ENCODE measurements at regions of chr13 and their contacts with region 1.

Region 1: GRCh38 chr13:98556968-98557631 is 19.8 kb downstream of the STK24 start:
- DNase-seq: peak in 5 of 14 experiments; percentile 33 to 66 (median 48)
- ATAC-seq: peak; percentile 63
- H3K4me3 ChIP-seq: no peak overlapping the region
- H3K4me3 Mint-ChIP-seq: peak overlapping the region; percentile 78
- H3K27ac ChIP-seq: no peak overlapping the region
- H3K27ac Mint-ChIP-seq: peak overlapping the region; percentile 77
- H3K4me1 ChIP-seq: peaks cover 89% of the 10 kb centered on the region
- H3K4me1 Mint-ChIP-seq: peaks cover 87% of the 10 kb centered on the region
- H3K27me3 ChIP-seq: no peaks in the 10 kb centered on the region
- H3K27me3 Mint-ChIP-seq: no peaks in the 10 kb centered on the region
- CTCF ChIP-seq: no peak

Region 2: DNA sequence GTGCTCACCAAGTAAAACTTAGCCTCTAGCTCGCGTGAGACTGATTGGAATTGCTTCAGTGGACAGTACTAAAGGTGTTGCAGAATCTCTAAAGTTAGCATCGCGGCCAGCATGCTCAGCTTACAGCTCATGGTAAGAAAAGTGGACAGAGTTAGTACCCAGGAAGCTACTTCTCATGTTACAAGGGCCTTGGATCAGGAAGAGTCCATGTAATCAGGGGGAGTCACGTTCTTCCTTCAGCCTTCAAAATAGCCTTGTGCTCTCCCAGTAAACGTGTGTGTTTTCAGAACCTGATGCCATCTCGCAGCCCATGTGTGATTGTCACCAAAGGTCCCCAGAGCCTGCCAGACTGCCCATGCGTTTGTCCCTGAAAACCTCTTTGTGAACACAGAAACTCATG is 184.2 kb before region 1 on chr13:
- CTCF ChIA-PET with region 1: no interaction called
- POLR2A ChIA-PET with region 1: no interaction called
- intact Hi-C with region 1: no loop called
- DNase-seq: no peak
- ATAC-seq: no peak
- H3K4me3 ChIP-seq: no peak overlapping the region
- H3K4me3 Mint-ChIP-seq: no peak overlapping the region
- H3K27ac ChIP-seq: no peak overlapping the region
- H3K27ac Mint-ChIP-seq: no peak overlapping the region
- H3K4me1 ChIP-seq: no peaks in the 10 kb centered on the region
- H3K4me1 Mint-ChIP-seq: no peaks in the 10 kb centered on the region
- H3K27me3 ChIP-seq: no peaks in the 10 kb centered on the region
- H3K27me3 Mint-ChIP-seq: peaks cover 21% of the 10 kb centered on the region
- CTCF ChIP-seq: no peak

Region 3: DNA sequence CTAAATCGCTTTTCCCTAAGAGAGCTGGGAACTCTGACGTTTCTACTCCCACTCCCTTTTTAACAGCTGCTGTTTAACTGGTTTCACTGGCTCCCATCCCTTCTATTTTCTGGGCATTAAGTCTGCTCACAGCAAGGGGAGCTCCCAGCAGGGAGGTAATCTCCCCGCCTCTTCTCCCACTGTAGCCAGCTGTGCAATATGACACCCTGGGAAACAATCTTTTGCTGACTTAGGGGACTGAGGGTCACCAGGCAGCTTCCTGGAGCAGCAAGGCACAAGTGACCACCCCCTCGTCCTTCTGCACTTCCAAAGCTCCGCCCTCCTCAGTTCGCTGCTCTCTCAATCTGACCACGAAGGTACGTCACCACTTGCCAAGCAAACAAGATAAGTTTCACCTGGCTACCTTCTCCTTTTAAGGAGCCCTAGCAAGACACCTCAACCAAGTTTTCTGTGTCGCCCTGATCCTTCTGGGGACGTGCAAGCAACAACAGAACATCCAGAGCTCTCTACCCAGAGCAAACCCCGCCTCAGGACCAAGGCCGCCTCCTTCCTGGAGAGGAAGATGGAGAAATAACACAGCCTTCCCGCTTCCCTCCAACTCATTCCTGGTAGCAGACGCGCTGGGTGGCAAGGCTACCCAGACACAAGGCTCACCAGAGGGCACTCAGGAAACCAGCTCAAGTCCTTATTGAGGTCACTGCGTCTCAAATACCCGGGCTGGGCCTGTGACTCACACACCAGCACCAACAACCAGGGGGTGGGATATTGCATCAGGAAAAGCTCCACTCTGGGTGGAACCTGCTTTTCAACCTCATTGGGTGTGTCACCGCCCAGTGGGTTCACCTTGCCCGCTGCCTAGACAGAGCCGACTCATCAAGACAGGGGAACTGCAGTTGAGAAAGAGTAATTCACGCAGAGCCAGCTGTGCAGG is 72.5 kb before region 1 on chr13:
- CTCF ChIA-PET with region 1: interaction called, 11 read pairs
- POLR2A ChIA-PET with region 1: interaction called, 5 read pairs
- intact Hi-C with region 1: no loop called
- DNase-seq: peak; percentile 33 to 93 (median 61)
- ATAC-seq: peak; percentile 80
- H3K4me3 ChIP-seq: no peak overlapping the region
- H3K4me3 Mint-ChIP-seq: peak overlapping the region; percentile 69
- H3K27ac ChIP-seq: peak overlapping the region; percentile 29 to 50
- H3K27ac Mint-ChIP-seq: peak overlapping the region; percentile 89
- H3K4me1 ChIP-seq: peaks cover 88% of the 10 kb centered on the region
- H3K4me1 Mint-ChIP-seq: peaks cover 81% of the 10 kb centered on the region
- H3K27me3 ChIP-seq: no peaks in the 10 kb centered on the region
- H3K27me3 Mint-ChIP-seq: no peaks in the 10 kb centered on the region
- CTCF ChIP-seq: no peak

Region 4: GRCh38 chr13:98504371-98504963 is 52.6 kb before region 1 on chr13:
- CTCF ChIA-PET with region 1: no interaction called
- POLR2A ChIA-PET with region 1: no interaction called
- intact Hi-C with region 1: no loop called
- DNase-seq: peak in 3 of 14 experiments; percentile 41 to 63 (median 51)
- ATAC-seq: peak; percentile 61
- H3K4me3 ChIP-seq: no peak overlapping the region
- H3K4me3 Mint-ChIP-seq: no peak overlapping the region
- H3K27ac ChIP-seq: no peak overlapping the region
- H3K27ac Mint-ChIP-seq: peak overlapping the region; percentile 81
- H3K4me1 ChIP-seq: peaks cover 62% of the 10 kb centered on the region
- H3K4me1 Mint-ChIP-seq: peaks cover 92% of the 10 kb centered on the region
- H3K27me3 ChIP-seq: no peaks in the 10 kb centered on the region
- H3K27me3 Mint-ChIP-seq: no peaks in the 10 kb centered on the region
- CTCF ChIP-seq: no peak

Region 5: DNA sequence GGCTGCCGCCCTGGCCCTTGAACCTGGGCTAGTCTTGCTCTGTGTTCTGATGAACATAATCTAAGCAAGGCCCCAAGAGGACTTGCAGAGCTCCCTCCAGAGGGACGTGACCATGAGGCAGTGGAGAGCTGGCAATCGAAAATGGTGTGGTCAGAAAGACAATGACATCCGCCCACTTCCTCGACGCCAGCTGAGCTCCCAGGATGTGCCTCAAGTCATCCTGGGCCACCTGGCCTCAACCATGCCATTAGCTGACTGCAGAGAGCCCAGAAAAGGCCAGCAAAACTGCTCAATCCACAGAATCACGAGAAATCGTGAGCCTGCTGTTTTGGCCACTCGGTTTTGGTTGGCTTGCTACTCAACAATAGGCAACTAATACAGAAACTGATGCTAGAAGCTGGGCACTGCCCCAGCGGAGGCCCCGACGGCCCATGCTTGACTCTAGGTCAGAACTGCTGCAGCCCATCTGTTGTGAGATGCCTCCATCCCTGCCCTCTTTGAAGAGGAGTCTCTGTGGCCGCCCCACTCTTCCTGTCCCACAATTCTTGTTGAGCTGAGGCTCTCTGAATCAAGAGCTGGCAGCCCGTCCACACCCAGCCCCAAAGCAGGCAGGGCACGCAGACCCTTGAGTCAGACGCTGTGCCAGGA is 33.5 kb before region 1 on chr13:
- CTCF ChIA-PET with region 1: interaction called, 3 read pairs
- POLR2A ChIA-PET with region 1: no interaction called
- intact Hi-C with region 1: loop called in 1 of 2 experiments (anchors 5 kb)
- DNase-seq: peak in 1 of 14 experiments; percentile 25
- ATAC-seq: no peak
- H3K4me3 ChIP-seq: no peak overlapping the region
- H3K4me3 Mint-ChIP-seq: peak overlapping the region; percentile 17
- H3K27ac ChIP-seq: peak overlapping the region; percentile 5 to 51
- H3K27ac Mint-ChIP-seq: peak overlapping the region; percentile 86
- H3K4me1 ChIP-seq: peaks cover 89% of the 10 kb centered on the region
- H3K4me1 Mint-ChIP-seq: peaks cover 92% of the 10 kb centered on the region
- H3K27me3 ChIP-seq: no peaks in the 10 kb centered on the region
- H3K27me3 Mint-ChIP-seq: no peaks in the 10 kb centered on the region
- CTCF ChIP-seq: no peak

Region 6: GRCh38 chr13:98542568-98543377 is 14.3 kb before region 1 on chr13:
- CTCF ChIA-PET with region 1: interaction called, 9 read pairs
- POLR2A ChIA-PET with region 1: no interaction called
- intact Hi-C with region 1: loop called in 1 of 2 experiments (anchors 2 kb)
- DNase-seq: peak in 3 of 14 experiments; percentile 47 to 58 (median 49)
- ATAC-seq: peak; percentile 61
- H3K4me3 ChIP-seq: peak overlapping the region; percentile 37
- H3K4me3 Mint-ChIP-seq: peak overlapping the region; percentile 65
- H3K27ac ChIP-seq: peak overlapping the region in 1 of 2 donors; percentile 28
- H3K27ac Mint-ChIP-seq: peak overlapping the region; percentile 63
- H3K4me1 ChIP-seq: peaks cover 77% of the 10 kb centered on the region
- H3K4me1 Mint-ChIP-seq: peaks cover 94% of the 10 kb centered on the region
- H3K27me3 ChIP-seq: no peaks in the 10 kb centered on the region
- H3K27me3 Mint-ChIP-seq: no peaks in the 10 kb centered on the region
- CTCF ChIP-seq: no peak

Region 7: GRCh38 chr13:98570929-98571372 is 13.9 kb after region 1 on chr13:
- CTCF ChIA-PET with region 1: interaction called, 4 read pairs
- POLR2A ChIA-PET with region 1: interaction called, 16 read pairs
- intact Hi-C with region 1: loop called in 1 of 2 experiments (anchors 1 kb)
- DNase-seq: peak in 7 of 14 experiments; percentile 21 to 80 (median 52)
- ATAC-seq: peak; percentile 59
- H3K4me3 ChIP-seq: peak overlapping the region; percentile 59
- H3K4me3 Mint-ChIP-seq: peak overlapping the region; percentile 92
- H3K27ac ChIP-seq: peak overlapping the region; percentile 55 to 71
- H3K27ac Mint-ChIP-seq: peak overlapping the region; percentile 93
- H3K4me1 ChIP-seq: peaks cover 69% of the 10 kb centered on the region
- H3K4me1 Mint-ChIP-seq: peaks cover 99% of the 10 kb centered on the region
- H3K27me3 ChIP-seq: no peaks in the 10 kb centered on the region
- H3K27me3 Mint-ChIP-seq: no peaks in the 10 kb centered on the region
- CTCF ChIP-seq: no peak

Region 8: DNA sequence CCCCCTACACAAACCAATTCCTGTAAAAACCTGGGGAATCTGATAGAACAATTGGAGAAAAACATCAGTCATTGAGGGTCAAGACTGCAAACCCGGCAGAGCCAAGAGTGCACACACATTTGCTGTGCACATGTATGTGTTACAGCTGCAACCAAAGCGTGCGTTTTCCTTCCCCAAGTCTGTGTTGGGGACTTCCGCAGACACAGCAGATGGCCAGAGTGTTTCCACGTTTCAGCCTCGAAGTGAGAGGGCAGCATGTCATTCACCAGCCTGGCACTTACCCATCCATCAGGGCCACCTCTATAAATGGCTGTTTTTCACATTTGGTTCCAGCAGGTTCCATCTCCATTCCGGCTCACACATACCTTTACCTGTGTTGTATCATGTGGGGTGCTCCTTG is 1137.1 kb after region 1 on chr13:
- CTCF ChIA-PET with region 1: no interaction called
- POLR2A ChIA-PET with region 1: no interaction called
- intact Hi-C with region 1: no loop called
- DNase-seq: no peak
- ATAC-seq: no peak
- H3K4me3 ChIP-seq: no peak overlapping the region
- H3K4me3 Mint-ChIP-seq: no peak overlapping the region
- H3K27ac ChIP-seq: no peak overlapping the region
- H3K27ac Mint-ChIP-seq: no peak overlapping the region
- H3K4me1 ChIP-seq: no peaks in the 10 kb centered on the region
- H3K4me1 Mint-ChIP-seq: peaks cover 2% of the 10 kb centered on the region
- H3K27me3 ChIP-seq: no peaks in the 10 kb centered on the region
- H3K27me3 Mint-ChIP-seq: no peaks in the 10 kb centered on the region
- CTCF ChIP-seq: no peak

Measured in CD4-positive, alpha-beta T cell (primary cell).